Activated B cell treated with CpG ODN at 0.5 μM for 24 hours (primary cell): ENCODE measurements at regions of chr4 and their contacts with region 1.

Region 1: GRCh38 chr4:147984065-147984777 is 252.3 kb downstream of the ARHGAP10 start:
- DNase-seq: no peak
- ATAC-seq: no peak
- H3K4me3 Mint-ChIP-seq: no peak overlapping the region
- H3K27ac Mint-ChIP-seq: no peak overlapping the region
- H3K4me1 Mint-ChIP-seq: no peaks in the 10 kb centered on the region
- H3K27me3 Mint-ChIP-seq: peaks cover 5% of the 10 kb centered on the region
- CTCF ChIP-seq: no peak

Region 2: GRCh38 chr4:147960971-147961370 is 23.2 kb before region 1 on chr4:
- CTCF ChIA-PET with region 1: no interaction called
- POLR2A ChIA-PET with region 1: no interaction called
- intact Hi-C with region 1: no loop called
- DNase-seq: no peak
- ATAC-seq: no peak
- H3K4me3 Mint-ChIP-seq: no peak overlapping the region
- H3K27ac Mint-ChIP-seq: no peak overlapping the region
- H3K4me1 Mint-ChIP-seq: no peaks in the 10 kb centered on the region
- H3K27me3 Mint-ChIP-seq: no peaks in the 10 kb centered on the region
- CTCF ChIP-seq: no peak

Region 3: GRCh38 chr4:148044912-148045352 is 60.7 kb after region 1 on chr4:
- CTCF ChIA-PET with region 1: no interaction called
- POLR2A ChIA-PET with region 1: no interaction called
- intact Hi-C with region 1: no loop called
- DNase-seq: no peak
- ATAC-seq: no peak
- H3K4me3 Mint-ChIP-seq: no peak overlapping the region
- H3K27ac Mint-ChIP-seq: no peak overlapping the region
- H3K4me1 Mint-ChIP-seq: peaks cover 8% of the 10 kb centered on the region
- H3K27me3 Mint-ChIP-seq: peaks cover 3% of the 10 kb centered on the region
- CTCF ChIP-seq: no peak

Region 4: GRCh38 chr4:148126825-148127224 is 142.6 kb after region 1 on chr4:
- CTCF ChIA-PET with region 1: no interaction called
- POLR2A ChIA-PET with region 1: no interaction called
- intact Hi-C with region 1: no loop called
- DNase-seq: no peak
- ATAC-seq: no peak
- H3K4me3 Mint-ChIP-seq: no peak overlapping the region
- H3K27ac Mint-ChIP-seq: no peak overlapping the region
- H3K4me1 Mint-ChIP-seq: no peaks in the 10 kb centered on the region
- H3K27me3 Mint-ChIP-seq: no peaks in the 10 kb centered on the region
- CTCF ChIP-seq: no peak

Region 5: DNA sequence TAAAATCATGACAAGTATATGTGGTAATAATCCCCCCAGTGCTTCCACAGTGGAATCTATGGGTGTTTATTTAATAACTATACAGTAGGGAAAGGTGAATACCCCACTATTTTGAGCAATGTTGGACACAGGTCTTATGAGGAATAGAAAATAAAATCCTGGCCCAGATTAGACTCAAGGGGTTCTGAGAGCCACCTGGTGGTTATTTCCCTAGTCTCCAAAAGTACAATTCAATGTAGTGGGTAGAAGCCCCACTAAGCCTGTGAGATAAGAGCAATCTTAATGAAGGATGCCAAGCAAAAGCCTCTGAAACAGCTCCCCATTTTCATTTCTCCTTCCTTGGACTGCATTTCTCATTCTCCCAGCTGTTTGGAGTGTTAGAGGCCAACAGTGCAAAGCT is 786.2 kb after region 1 on chr4:
- CTCF ChIA-PET with region 1: no interaction called
- POLR2A ChIA-PET with region 1: no interaction called
- intact Hi-C with region 1: loop called (anchors 5 kb)
- DNase-seq: no peak
- ATAC-seq: no peak
- H3K4me3 Mint-ChIP-seq: no peak overlapping the region
- H3K27ac Mint-ChIP-seq: no peak overlapping the region
- H3K4me1 Mint-ChIP-seq: no peaks in the 10 kb centered on the region
- H3K27me3 Mint-ChIP-seq: no peaks in the 10 kb centered on the region
- CTCF ChIP-seq: no peak

Region 6: GRCh38 chr4:149897783-149898182 is 1913.6 kb after region 1 on chr4:
- CTCF ChIA-PET with region 1: no interaction called
- POLR2A ChIA-PET with region 1: no interaction called
- intact Hi-C with region 1: loop called (anchors 5 kb)
- DNase-seq: no peak
- ATAC-seq: no peak
- H3K4me3 Mint-ChIP-seq: no peak overlapping the region
- H3K27ac Mint-ChIP-seq: no peak overlapping the region
- H3K4me1 Mint-ChIP-seq: no peaks in the 10 kb centered on the region
- H3K27me3 Mint-ChIP-seq: no peaks in the 10 kb centered on the region
- CTCF ChIP-seq: no peak